Right cardiac atrium (tissue), 5 donors: ENCODE measurements at regions of chr3 and their contacts with region 1.

Region 1: GRCh38 chr3:188954590-188955208 is 217.1 kb upstream of the TPRG1 start:
- DNase-seq: peak; percentile 83 to 91 (median 90)
- ATAC-seq: peak; percentile 75 to 81
- H3K4me3 ChIP-seq: no peak overlapping the region
- H3K27ac ChIP-seq: no peak overlapping the region
- H3K4me1 ChIP-seq: peaks cover 11% of the 10 kb centered on the region
- H3K27me3 ChIP-seq: no peaks in the 10 kb centered on the region

Region 2: GRCh38 chr3:187738331-187739093 is 1216.2 kb before region 1 on chr3:
- intact Hi-C with region 1: loop called (anchors 2 to 5 kb)
- DNase-seq: peak; percentile 88 to 95 (median 92)
- ATAC-seq: peak; percentile 77
- H3K4me3 ChIP-seq: peak overlapping the region; percentile 74
- H3K27ac ChIP-seq: peak overlapping the region; percentile 96
- H3K4me1 ChIP-seq: peaks cover 6% of the 10 kb centered on the region
- H3K27me3 ChIP-seq: no peaks in the 10 kb centered on the region

Region 3: DNA sequence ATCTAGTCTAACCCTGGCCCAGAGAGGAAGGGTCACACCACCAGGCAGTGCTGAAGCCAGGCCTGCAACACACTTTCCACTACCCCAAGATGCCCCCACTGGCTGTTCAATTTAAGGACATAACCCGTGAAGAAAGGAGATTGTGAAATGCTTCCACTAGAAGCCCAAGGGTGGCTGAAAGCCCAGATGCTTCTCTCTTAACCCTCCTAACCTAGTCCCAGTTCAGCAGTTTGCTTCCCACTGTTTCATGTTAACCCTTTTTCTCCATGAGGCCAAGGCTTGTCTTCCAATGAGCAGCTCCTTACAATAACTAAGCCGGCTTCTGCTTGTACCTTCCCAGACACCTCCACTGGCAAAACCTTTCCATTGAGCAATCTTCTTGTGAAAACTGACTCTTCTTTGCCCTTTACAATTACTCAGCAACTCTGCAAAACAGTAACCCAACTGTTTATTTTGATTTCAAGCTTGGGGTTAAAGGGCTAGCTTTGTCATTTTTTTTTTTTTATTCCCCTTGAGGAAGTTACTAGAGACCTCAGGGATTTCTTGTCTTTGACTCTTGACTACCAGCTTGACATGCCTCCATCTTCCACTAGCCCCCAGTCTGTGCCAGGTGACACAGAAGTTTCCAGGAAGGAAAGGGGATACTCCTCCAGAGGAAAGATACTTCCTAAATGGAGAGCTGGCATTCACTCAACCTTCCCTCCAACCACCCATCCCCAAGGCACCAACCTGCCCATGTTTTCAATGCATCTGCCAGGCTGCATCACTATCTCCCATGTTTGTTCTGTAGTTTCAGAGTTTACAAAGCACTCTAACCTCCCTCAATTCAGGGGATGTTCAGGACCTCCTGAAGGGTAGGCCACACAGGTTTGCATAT is 999.4 kb before region 1 on chr3:
- intact Hi-C with region 1: loop called in 1 of 4 experiments (anchors 10 kb)
- DNase-seq: peak; percentile 41 to 68 (median 65)
- ATAC-seq: peak; percentile 74 to 81
- H3K4me3 ChIP-seq: no peak overlapping the region
- H3K27ac ChIP-seq: peak overlapping the region; percentile 42
- H3K4me1 ChIP-seq: peaks cover 7% of the 10 kb centered on the region
- H3K27me3 ChIP-seq: no peaks in the 10 kb centered on the region

Region 4: GRCh38 chr3:188052169-188053030 is 902.3 kb before region 1 on chr3:
- intact Hi-C with region 1: loop called in 1 of 4 experiments (anchors 5 kb)
- DNase-seq: peak; percentile 92 to 96 (median 95)
- ATAC-seq: peak; percentile 97 to 99
- H3K4me3 ChIP-seq: no peak overlapping the region
- H3K27ac ChIP-seq: peak overlapping the region; percentile 94
- H3K4me1 ChIP-seq: peaks cover 3% of the 10 kb centered on the region
- H3K27me3 ChIP-seq: no peaks in the 10 kb centered on the region

Region 5: GRCh38 chr3:188780193-188781147 is 174.2 kb before region 1 on chr3:
- intact Hi-C with region 1: loop called in 1 of 4 experiments (anchors 5 kb)
- DNase-seq: peak in 2 of 3 donors; percentile 45 to 72
- ATAC-seq: peak; percentile 85 to 92
- H3K4me3 ChIP-seq: no peak overlapping the region
- H3K27ac ChIP-seq: peak overlapping the region; percentile 39
- H3K4me1 ChIP-seq: peaks cover 7% of the 10 kb centered on the region
- H3K27me3 ChIP-seq: no peaks in the 10 kb centered on the region

Region 6: DNA sequence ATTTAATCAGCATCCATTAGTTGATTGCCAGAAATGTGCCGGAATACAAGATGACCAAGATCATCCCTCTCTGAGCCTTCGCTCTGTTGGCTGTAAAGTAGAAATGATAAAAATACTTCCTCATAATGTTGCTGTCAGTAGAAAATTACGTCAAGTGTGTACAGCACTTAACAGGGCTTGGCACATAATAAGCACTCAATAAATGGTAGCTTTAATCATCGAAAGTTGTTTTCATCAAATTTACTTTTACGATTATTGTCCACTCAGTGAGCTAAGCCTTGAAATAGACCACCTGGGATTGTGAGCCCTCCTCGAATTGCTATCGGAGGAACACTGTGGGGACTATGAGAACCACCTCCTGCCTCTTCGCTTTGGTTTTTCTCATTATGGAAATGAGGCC is 84.3 kb before region 1 on chr3:
- intact Hi-C with region 1: no loop called
- DNase-seq: no peak
- ATAC-seq: no peak
- H3K4me3 ChIP-seq: no peak overlapping the region
- H3K27ac ChIP-seq: no peak overlapping the region
- H3K4me1 ChIP-seq: peaks cover 3% of the 10 kb centered on the region
- H3K27me3 ChIP-seq: no peaks in the 10 kb centered on the region

Region 7: GRCh38 chr3:189148081-189148507 is 193.4 kb after region 1 on chr3:
- intact Hi-C with region 1: loop called in 1 of 4 experiments (anchors 10 kb)
- DNase-seq: peak; percentile 46 to 78 (median 69)
- ATAC-seq: peak; percentile 50 to 73
- H3K4me3 ChIP-seq: no peak overlapping the region
- H3K27ac ChIP-seq: no peak overlapping the region
- H3K4me1 ChIP-seq: no peaks in the 10 kb centered on the region
- H3K27me3 ChIP-seq: no peaks in the 10 kb centered on the region